HCT116 (cell line): ENCODE measurements at regions of chr11 and their contacts with region 1.

Region 1: GRCh38 chr11:45102810-45103621 is 43.4 kb upstream of the PRDM11 start:
- DNase-seq: peak; percentile 45
- ATAC-seq: peak; percentile 68
- H3K4me3 ChIP-seq: no peak overlapping the region
- H3K27ac ChIP-seq: no peak overlapping the region
- H3K4me1 ChIP-seq: peaks cover 0 to 7% of the 10 kb centered on the region in 2 experiments; a peak in 2 of 4 replicates
- H3K27me3 ChIP-seq: peaks cover 20% of the 10 kb centered on the region
- CTCF ChIP-seq: peak; percentile 91 to 97 (median 96)
- POLR2A ChIP-seq: no peak
- RAD21 ChIP-seq: peak; percentile 97

Region 2: GRCh38 chr11:44927174-44927661 is 175.8 kb before region 1 on chr11:
- CTCF ChIA-PET with region 1: interaction called, 126 read pairs
- POLR2A ChIA-PET with region 1: interaction called, 3 read pairs
- RAD21 ChIA-PET with region 1: interaction called, 7 to 11 read pairs
- intact Hi-C with region 1: loop called (anchors 1 kb)
- DNase-seq: peak; percentile 42
- ATAC-seq: peak; percentile 90
- H3K4me3 ChIP-seq: no peak overlapping the region
- H3K27ac ChIP-seq: no peak overlapping the region
- H3K4me1 ChIP-seq: no peaks in the 10 kb centered on the region
- H3K27me3 ChIP-seq: no peaks in the 10 kb centered on the region
- CTCF ChIP-seq: peak; percentile 84 to 91 (median 86)
- POLR2A ChIP-seq: no peak
- RAD21 ChIP-seq: peak; percentile 81